Activated B cell treated with CpG ODN at 0.5 μM for 24 hours (primary cell): ENCODE measurements at regions of chr1 and their contacts with region 1.

Region 1: GRCh38 chr1:92994105-92994712 is 32.9 kb upstream of the DIPK1A start:
- DNase-seq: no peak
- ATAC-seq: peak; percentile 99
- H3K4me3 Mint-ChIP-seq: no peak overlapping the region
- H3K27ac Mint-ChIP-seq: peak overlapping the region; percentile 10
- H3K4me1 Mint-ChIP-seq: peaks cover 38% of the 10 kb centered on the region
- H3K27me3 Mint-ChIP-seq: no peaks in the 10 kb centered on the region
- CTCF ChIP-seq: no peak

Region 2: DNA sequence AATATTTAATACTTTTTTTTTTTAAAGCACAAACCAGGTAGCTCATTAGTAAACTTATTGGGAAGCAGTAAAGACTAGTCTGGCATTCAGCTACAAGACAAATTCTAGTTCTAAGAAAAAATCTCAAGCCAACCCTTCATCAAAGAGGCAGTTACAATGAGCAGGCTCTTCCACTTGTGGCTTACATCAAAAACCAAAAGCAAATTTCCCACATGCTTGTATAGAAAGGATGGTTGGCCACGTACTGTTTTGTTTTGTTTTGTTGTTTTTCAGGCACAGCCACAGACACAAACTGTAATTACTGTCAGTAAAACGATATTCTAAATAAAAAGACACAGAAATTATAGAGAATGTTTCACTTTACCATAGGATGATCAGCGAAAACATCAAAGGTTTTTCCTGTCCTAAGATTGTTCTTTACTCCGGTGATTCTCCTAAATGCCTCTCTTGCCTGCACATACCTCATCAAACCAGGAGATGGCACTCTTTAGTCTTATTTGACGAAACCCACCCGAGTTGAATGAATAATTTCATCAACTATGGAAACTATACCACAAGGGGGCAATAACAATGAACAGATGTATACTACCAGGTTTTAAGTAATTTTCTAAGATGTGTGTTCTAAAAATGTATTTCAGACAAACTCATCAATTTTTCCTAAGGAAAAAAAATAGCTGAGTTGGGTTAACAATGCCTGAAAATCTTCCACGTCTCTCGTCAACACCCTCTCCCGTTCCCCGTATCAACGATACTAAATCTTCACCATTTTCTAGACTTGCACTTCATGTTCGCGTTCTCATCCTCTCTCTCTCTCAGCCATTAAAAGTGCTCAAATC is 135.4 kb before region 1 on chr1:
- CTCF ChIA-PET with region 1: interaction called, 116 read pairs
- POLR2A ChIA-PET with region 1: interaction called, 9 read pairs
- intact Hi-C with region 1: loop called (anchors 1 kb)
- DNase-seq: no peak
- ATAC-seq: peak; percentile 97
- H3K4me3 Mint-ChIP-seq: no peak overlapping the region
- H3K27ac Mint-ChIP-seq: no peak overlapping the region
- H3K4me1 Mint-ChIP-seq: peaks cover 14% of the 10 kb centered on the region
- H3K27me3 Mint-ChIP-seq: no peaks in the 10 kb centered on the region
- CTCF ChIP-seq: peak; percentile 100

Region 3: DNA sequence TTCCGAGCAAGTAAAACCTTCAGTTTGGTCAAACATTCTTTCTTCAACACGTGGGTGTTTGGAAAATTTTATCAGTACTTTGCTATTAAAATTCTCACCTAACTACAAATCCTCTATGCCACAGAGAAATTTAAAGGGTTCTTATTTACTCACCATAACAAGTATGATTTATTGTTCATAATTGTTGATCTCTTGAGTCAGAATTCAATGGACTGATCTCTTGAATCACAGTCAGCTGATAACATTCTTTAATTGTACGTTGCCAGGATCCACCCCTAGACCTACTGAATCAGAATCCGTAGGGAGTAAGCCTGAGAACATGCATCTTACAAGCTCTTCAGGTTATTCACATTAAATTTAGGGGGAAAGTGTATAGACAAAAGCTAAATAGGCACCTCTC is 84.1 kb before region 1 on chr1:
- CTCF ChIA-PET with region 1: interaction called, 11 read pairs
- POLR2A ChIA-PET with region 1: no interaction called
- intact Hi-C with region 1: no loop called
- DNase-seq: no peak
- ATAC-seq: no peak
- H3K4me3 Mint-ChIP-seq: no peak overlapping the region
- H3K27ac Mint-ChIP-seq: no peak overlapping the region
- H3K4me1 Mint-ChIP-seq: peaks cover 44% of the 10 kb centered on the region
- H3K27me3 Mint-ChIP-seq: no peaks in the 10 kb centered on the region
- CTCF ChIP-seq: no peak

Region 4: DNA sequence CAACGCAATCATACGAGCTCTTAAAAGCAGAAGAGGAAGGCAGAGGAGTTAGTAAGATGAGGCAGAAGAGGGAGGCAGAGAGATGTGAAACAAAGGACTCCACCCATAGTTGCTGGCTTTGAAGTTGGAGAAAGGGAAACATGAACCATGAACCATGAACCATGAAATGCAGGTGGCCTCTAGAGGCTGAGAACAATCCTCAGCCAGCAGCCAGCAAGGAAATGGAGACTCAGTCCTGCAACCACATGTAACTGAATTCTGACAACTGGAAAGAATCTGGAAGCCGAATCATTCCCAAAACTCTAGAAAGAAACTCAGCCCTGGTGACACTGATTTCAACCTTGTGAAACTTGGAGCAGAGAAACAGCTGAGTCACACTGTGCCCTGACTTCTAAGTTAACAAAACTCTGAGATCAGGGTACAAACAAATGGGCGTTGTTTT is 43.0 kb before region 1 on chr1:
- CTCF ChIA-PET with region 1: interaction called, 199 read pairs
- POLR2A ChIA-PET with region 1: interaction called, 3 read pairs
- intact Hi-C with region 1: loop called (anchors 5 kb)
- DNase-seq: no peak
- ATAC-seq: peak; percentile 79
- H3K4me3 Mint-ChIP-seq: no peak overlapping the region
- H3K27ac Mint-ChIP-seq: no peak overlapping the region
- H3K4me1 Mint-ChIP-seq: peaks cover 34% of the 10 kb centered on the region
- H3K27me3 Mint-ChIP-seq: no peaks in the 10 kb centered on the region
- CTCF ChIP-seq: no peak

Region 5: GRCh38 chr1:92968138-92969032 is 25.8 kb before region 1 on chr1:
- CTCF ChIA-PET with region 1: interaction called, 251 read pairs
- POLR2A ChIA-PET with region 1: interaction called, 94 read pairs
- intact Hi-C with region 1: loop called (anchors 1 kb)
- DNase-seq: no peak
- ATAC-seq: peak; percentile 74
- H3K4me3 Mint-ChIP-seq: no peak overlapping the region
- H3K27ac Mint-ChIP-seq: peak overlapping the region; percentile 4
- H3K4me1 Mint-ChIP-seq: peaks cover 45% of the 10 kb centered on the region
- H3K27me3 Mint-ChIP-seq: no peaks in the 10 kb centered on the region
- CTCF ChIP-seq: peak; percentile 38

Region 6: DNA sequence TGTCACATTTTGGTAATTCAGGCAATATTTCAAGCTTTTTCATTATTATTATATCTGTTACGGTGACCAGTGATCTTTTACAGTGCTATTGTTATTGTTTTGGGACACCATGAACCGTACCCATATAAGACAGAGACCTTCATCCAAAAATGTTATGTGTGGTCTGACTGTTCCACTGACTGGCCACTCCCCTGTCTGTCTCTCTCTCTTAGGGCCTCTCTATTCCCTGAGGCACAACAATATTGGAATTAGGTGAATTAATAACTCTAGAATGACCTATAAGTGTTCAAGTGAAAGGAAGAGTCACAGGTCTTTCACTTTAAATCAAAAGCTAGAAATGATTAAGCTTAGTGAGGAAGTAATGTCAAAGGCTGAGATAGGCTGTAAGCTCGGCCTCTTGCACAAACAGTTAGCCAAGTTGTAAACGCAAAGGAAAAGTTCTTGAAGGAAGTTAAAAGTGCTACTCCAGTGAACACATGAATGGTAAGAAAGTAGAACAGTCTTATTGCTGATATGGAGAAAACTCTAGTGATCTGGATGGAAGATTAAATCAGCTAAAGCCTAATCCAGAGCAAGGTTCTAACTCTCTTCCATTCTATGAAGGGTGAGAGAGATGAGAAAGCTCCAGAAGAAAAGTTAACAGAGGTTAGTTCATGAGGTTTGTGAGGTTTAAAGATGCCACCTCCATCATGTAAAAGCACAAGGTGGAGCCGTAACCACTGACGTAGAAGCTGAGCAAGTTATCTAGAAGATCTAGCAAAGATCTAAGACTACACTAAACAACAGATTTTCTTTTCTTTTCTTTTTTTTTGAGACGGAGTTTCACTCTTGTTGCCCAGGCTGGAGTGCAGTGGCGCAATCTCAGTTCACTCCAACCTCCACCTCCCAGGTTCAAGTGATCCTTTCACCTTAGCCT is 13.2 kb before region 1 on chr1:
- CTCF ChIA-PET with region 1: interaction called, 251 read pairs
- POLR2A ChIA-PET with region 1: interaction called, 25 read pairs
- intact Hi-C with region 1: loop called (anchors 1 kb)
- DNase-seq: no peak
- ATAC-seq: peak; percentile 59
- H3K4me3 Mint-ChIP-seq: peak overlapping the region; percentile 55
- H3K27ac Mint-ChIP-seq: peak overlapping the region; percentile 94
- H3K4me1 Mint-ChIP-seq: peaks cover 67% of the 10 kb centered on the region
- H3K27me3 Mint-ChIP-seq: no peaks in the 10 kb centered on the region
- CTCF ChIP-seq: no peak

Region 7: GRCh38 chr1:93123201-93123783 is 129.1 kb after region 1 on chr1:
- CTCF ChIA-PET with region 1: no interaction called
- POLR2A ChIA-PET with region 1: no interaction called
- intact Hi-C with region 1: no loop called
- DNase-seq: no peak
- ATAC-seq: no peak
- H3K4me3 Mint-ChIP-seq: no peak overlapping the region
- H3K27ac Mint-ChIP-seq: no peak overlapping the region
- H3K4me1 Mint-ChIP-seq: no peaks in the 10 kb centered on the region
- H3K27me3 Mint-ChIP-seq: no peaks in the 10 kb centered on the region
- CTCF ChIP-seq: no peak